ENCODE measurements at regions of chr6 and their contacts with region 1.

Region 1: GRCh38 chr6:31827286-31828079 is at the start of gene HSPA1B:
- DNase-seq: peak; percentile 99
- H3K4me3 ChIP-seq: peak within 1 kb of the TSS; percentile 84
- H3K27ac ChIP-seq: peak within 1 kb of the TSS; percentile 98
- H3K4me1 ChIP-seq: peaks cover 54% of the 10 kb centered on the region
- H3K27me3 ChIP-seq: no peaks in the 10 kb centered on the region
- CTCF ChIP-seq: no peak
- total RNA-seq, gene HSPA1B: 334 and 340 TPM in 2 replicates

Region 2: GRCh38 chr6:31016659-31017299 is 810.7 kb before region 1 on chr6:
- CTCF ChIA-PET with region 1: no interaction called
- POLR2A ChIA-PET with region 1: no interaction called
- intact Hi-C with region 1: no loop called
- DNase-seq: no peak
- H3K4me3 ChIP-seq: no peak overlapping the region
- H3K27ac ChIP-seq: no peak overlapping the region
- H3K4me1 ChIP-seq: no peaks in the 10 kb centered on the region
- H3K27me3 ChIP-seq: no peaks in the 10 kb centered on the region
- CTCF ChIP-seq: no peak

Region 3: DNA sequence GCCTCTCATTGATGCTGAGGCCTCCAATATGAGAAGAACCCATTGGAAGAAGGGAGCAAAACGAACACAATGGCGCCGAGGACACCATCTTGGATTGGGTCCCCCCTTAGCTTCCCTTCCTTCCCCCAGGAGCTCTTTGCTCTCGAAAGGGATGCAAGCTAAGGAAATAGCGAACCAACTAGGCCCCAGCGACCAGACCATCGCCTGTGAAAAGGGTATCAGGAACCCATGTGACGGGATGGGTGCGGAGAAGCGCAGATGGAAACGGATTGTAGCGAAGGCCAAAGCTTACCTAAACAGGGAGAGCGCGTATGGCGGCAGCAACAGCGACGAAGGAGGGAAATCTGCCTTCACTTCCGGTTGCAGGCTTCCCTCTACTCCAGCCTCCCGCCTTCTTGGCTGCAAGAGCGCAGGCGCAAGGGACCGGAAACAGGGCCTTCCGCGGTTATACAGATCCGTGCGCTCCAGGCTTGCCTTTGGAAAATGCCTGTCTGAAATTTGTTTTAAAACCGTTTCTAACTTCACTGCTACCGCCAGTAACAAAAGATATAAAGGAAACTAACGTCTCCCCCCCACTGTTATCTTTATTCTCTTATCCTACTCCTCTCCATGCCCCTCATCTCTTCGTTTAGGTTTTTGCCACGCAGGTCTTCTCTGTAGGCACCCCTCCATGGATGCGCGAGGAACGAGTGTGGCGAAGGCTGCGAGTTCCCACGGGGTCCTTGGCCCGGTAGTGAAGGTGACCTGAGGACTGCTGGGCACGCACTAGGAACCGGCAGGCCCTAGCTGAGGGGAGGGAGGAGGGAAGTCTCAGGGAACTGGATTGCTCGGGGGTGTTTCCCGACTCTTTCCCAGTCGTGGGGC is 285.6 kb before region 1 on chr6 and contains the start of gene DDX39B:
- CTCF ChIA-PET with region 1: no interaction called
- POLR2A ChIA-PET with region 1: no interaction called
- intact Hi-C with region 1: loop called (anchors 10 kb)
- DNase-seq: peak; percentile 89 to 90
- H3K4me3 ChIP-seq: peak within 1 kb of the TSS; percentile 75
- H3K27ac ChIP-seq: peak within 1 kb of the TSS; percentile 95
- H3K4me1 ChIP-seq: peaks cover 29% of the 10 kb centered on the region
- H3K27me3 ChIP-seq: no peaks in the 10 kb centered on the region
- CTCF ChIP-seq: no peak
- total RNA-seq, gene DDX39B: 383 and 436 TPM in 2 replicates

Region 4: DNA sequence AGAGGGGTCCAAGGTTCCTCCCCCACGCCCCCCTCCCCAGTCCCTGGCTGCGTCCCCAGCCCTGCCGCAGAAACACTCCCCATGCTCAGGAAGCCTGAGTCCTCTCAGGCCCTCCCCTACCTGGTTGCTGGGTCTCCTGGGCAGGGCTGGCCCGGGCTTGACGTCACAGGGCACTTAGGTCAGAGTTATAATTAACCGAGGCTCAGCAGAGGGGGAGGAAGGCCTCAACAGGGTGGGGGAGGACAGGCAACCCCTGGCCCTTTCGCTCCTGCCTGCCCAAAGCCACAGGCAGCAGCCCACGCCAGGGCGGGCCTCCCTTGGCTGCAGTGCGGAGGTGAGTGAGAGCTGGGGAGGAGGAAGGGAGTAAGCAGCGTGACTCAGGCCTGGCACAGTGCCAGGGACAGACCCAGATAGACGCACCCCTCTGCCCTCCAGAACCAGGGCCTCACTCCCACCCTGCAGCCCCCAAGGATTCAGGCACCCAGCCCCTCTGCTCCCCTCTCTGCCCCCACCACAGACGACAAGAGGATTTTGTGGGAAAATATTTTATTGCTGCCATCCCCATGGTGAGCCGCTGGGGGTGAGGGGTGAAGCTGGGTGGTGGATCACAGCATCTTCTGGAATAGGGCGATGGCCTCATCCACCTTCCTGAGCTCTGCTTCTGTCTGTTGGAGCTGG is 50.4 kb before region 1 on chr6 and contains the start of gene VWA7:
- CTCF ChIA-PET with region 1: interaction called, 4 read pairs
- POLR2A ChIA-PET with region 1: interaction called, 10 read pairs
- intact Hi-C with region 1: loop called (anchors 1 kb)
- DNase-seq: peak; percentile 76 to 89
- H3K4me3 ChIP-seq: peak within 1 kb of the TSS; percentile 40; the same call in 1 of the 2 replicates
- H3K27ac ChIP-seq: peak within 1 kb of the TSS; percentile 58
- H3K4me1 ChIP-seq: peaks cover 31% of the 10 kb centered on the region
- H3K27me3 ChIP-seq: no peaks in the 10 kb centered on the region
- CTCF ChIP-seq: no peak
- total RNA-seq, gene VWA7: 6.0 and 9.6 TPM in 2 replicates

Region 5: GRCh38 chr6:31806465-31807272 is 20.8 kb before region 1 on chr6 and contains the start of gene LSM2:
- CTCF ChIA-PET with region 1: interaction called, 10 read pairs
- POLR2A ChIA-PET with region 1: interaction called, 13 read pairs
- intact Hi-C with region 1: no loop called
- DNase-seq: peak; percentile 82 to 97
- H3K4me3 ChIP-seq: peak within 1 kb of the TSS; percentile 93
- H3K27ac ChIP-seq: peak within 1 kb of the TSS; percentile 56
- H3K4me1 ChIP-seq: peaks cover 8% of the 10 kb centered on the region; the same call in 1 of the 2 replicates
- H3K27me3 ChIP-seq: no peaks in the 10 kb centered on the region
- CTCF ChIP-seq: peak; percentile 54
- total RNA-seq, gene LSM2: 67.5 and 74.3 TPM in 2 replicates

Region 6: GRCh38 chr6:31901953-31902643 is 74.6 kb after region 1 on chr6 and contains the start of gene ZBTB12:
- CTCF ChIA-PET with region 1: no interaction called
- POLR2A ChIA-PET with region 1: interaction called, 11 read pairs
- intact Hi-C with region 1: loop called (anchors 5 kb)
- DNase-seq: peak; percentile 76 to 95
- H3K4me3 ChIP-seq: peak within 1 kb of the TSS; percentile 65
- H3K27ac ChIP-seq: peak within 1 kb of the TSS; percentile 18; the same call in 1 of the 2 replicates
- H3K4me1 ChIP-seq: peaks cover 23% of the 10 kb centered on the region
- H3K27me3 ChIP-seq: no peaks in the 10 kb centered on the region
- CTCF ChIP-seq: no peak
- total RNA-seq, gene ZBTB12: 16.2 and 20.3 TPM in 2 replicates